ENCODE measurements at regions of chr6 and their contacts with region 1.

Region 1: GRCh38 chr6:136643850-136644596 is 93.8 kb upstream of the MAP7 start:
- DNase-seq: peak; percentile 97
- ATAC-seq: peak; percentile 95

Region 2: DNA sequence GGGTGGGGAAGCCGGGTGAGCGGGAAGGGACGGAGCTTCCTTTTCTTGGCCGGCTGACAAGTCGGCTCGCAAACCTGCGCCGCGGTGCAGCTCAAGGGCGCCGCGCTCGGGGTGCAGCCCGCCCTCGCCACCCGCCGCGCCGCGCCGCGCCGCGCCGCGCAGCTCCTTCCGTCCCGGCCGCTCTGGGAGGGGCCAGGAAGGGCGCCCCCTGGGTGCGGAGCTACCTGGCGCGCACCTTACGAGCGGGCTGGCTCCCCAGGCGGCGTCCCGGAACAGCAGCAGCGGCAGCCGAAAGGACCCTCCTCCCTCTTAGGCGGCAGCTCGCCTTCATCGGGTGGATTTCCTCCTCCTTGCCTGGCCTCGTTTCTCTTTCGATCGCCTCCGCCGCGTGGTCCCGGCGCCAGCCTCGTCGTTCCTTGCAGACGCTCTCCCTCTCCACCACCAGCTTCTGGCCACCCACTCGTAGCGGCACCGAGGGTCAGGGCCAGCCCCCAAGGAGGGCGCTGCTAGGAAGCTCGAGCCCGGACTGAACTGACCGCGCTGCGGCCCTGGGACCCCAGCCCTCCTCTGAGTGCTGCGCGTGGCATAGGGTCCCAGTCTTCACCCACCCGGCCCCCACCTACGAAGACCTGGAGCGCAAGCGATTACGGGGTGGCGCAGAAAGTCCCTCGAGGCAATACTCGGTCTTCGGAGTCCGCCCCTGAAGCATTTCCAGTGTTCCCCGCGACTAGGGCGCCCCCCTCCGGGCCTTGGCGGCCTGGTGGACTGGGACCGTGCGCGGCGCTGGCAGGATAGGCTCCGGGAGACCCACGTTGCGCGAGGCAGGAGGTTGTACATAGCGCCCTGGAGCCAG is 148.6 kb after region 1 on chr6 and contains the start of gene MAP3K5:
- intact Hi-C with region 1: loop called (anchors 10 kb)
- DNase-seq: peak; percentile 95
- ATAC-seq: peak; percentile 95
- total RNA-seq, gene MAP3K5: 18.9 TPM